ENCODE measurements at regions of chr5 and their contacts with region 1.

Region 1: GRCh38 chr5:72137826-72138409 is 30.6 kb downstream of the MAP1B start:
- DNase-seq: peak in 2 of 4 experiments; percentile 26
- ATAC-seq: 0 out of 3 replicates have a peak, but pooled peaks have one; percentile 26
- H3K4me3 ChIP-seq: no peak overlapping the region
- H3K27ac ChIP-seq: no peak overlapping the region
- H3K4me1 ChIP-seq: peaks cover 0 to 11% of the 10 kb centered on the region in 2 experiments; a peak in 3 of 5 replicates
- H3K27me3 ChIP-seq: no peaks in the 10 kb centered on the region
- CTCF ChIP-seq: peak in 2 of 3 experiments; percentile 24 to 68; a peak in 3 of 6 replicates
- EP300 ChIP-seq: no peak
- POLR2A ChIP-seq: no peak
- RAD21 ChIP-seq: peak; percentile 62 to 78

Region 2: DNA sequence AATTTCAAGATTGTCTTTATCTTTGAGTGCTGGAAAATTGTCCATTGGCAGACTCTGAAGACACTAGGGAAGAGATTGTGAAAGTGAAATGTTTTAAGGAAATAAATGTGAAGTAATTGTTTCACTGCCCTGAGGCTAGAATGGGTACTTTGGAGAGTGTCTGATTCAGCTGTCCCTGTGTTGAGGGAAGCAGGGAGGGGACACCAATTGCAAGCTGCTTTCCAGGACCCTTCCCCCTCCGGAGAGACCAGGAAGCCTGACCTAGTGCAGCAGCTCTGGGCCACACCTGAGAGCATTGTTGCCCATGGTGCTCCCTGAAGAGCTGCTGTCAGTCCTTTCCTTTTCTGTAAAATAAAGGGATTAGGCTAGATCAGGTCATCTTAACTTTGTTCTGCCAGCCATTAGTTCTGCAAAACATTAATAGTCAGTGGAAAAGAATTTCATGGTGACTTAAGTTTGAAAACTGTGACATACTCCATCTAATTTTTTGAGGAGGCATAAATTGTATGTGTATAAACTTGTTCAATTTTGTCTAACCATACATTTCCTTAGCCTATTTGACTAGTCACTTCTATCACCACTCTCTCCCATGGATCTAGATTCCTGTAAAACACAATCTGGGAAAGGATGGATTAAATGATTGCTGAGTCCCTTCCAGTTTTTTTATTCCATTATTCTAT is 11.8 kb before region 1 on chr5:
- CTCF ChIA-PET with region 1: no interaction called
- POLR2A ChIA-PET with region 1: interaction called, 10 read pairs
- in situ Hi-C with region 1: no loop called
- intact Hi-C with region 1: no loop called
- DNase-seq: no peak
- ATAC-seq: no peak; the same call in 2 of the 3 replicates
- H3K4me3 ChIP-seq: no peak overlapping the region
- H3K27ac ChIP-seq: no peak overlapping the region
- H3K4me1 ChIP-seq: peaks cover 0 to 3% of the 10 kb centered on the region in 2 experiments; a peak in 1 of 5 replicates
- H3K27me3 ChIP-seq: no peaks in the 10 kb centered on the region
- CTCF ChIP-seq: no peak
- EP300 ChIP-seq: no peak
- POLR2A ChIP-seq: no peak
- RAD21 ChIP-seq: no peak

Region 3: GRCh38 chr5:72244862-72245371 is 107.0 kb after region 1 on chr5:
- CTCF ChIA-PET with region 1: interaction called, 5 read pairs
- POLR2A ChIA-PET with region 1: interaction called, 3 read pairs
- in situ Hi-C with region 1: no loop called
- intact Hi-C with region 1: loop called (anchors 2 kb)
- DNase-seq: peak; percentile 31 to 75 (median 50)
- ATAC-seq: peak; percentile 92
- H3K4me3 ChIP-seq: no peak overlapping the region
- H3K27ac ChIP-seq: peak overlapping the region; percentile 36; the same call in 1 of the 3 replicates
- H3K4me1 ChIP-seq: peaks cover 18 to 54% of the 10 kb centered on the region in 2 experiments
- H3K27me3 ChIP-seq: no peaks in the 10 kb centered on the region
- CTCF ChIP-seq: peak; percentile 51 to 70 (median 60)
- EP300 ChIP-seq: no peak
- POLR2A ChIP-seq: no peak
- RAD21 ChIP-seq: peak; percentile 65 to 79

Measured in K562 (cell line).